ENCODE measurements at regions of chr13 and their contacts with region 1.

Region 1: GRCh38 chr13:41916173-41916954 is 44.5 kb downstream of the VWA8 start:
- DNase-seq: no peak
- ATAC-seq: peak; percentile 35 to 81 (median 72)
- H3K4me3 ChIP-seq: peak overlapping the region; percentile 42
- H3K27ac ChIP-seq: peak overlapping the region; percentile 71
- H3K4me1 ChIP-seq: peaks cover 64% of the 10 kb centered on the region
- H3K27me3 ChIP-seq: no peaks in the 10 kb centered on the region
- CTCF ChIP-seq: no peak

Region 2: DNA sequence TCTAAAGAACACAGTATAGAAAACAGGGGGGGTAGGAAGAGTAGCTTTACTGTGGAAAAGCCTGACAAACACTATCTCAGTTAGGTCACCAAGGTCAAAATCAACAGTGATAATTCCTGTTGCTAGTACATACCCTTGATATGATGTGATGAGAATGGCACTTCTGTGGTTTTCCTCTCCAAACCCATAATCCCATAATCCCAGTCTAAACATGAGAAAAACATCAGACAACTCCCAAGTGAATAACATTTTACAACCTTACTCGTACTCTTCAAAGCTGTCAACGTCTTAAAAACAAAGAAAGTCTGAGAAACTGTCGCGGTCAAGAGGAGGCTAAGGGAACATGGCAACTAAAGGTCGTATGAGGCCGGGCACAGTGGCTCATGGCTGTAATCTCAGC is 1387.5 kb before region 1 on chr13:
- intact Hi-C with region 1: no loop called
- DNase-seq: no peak
- ATAC-seq: no peak
- H3K4me3 ChIP-seq: no peak overlapping the region
- H3K27ac ChIP-seq: no peak overlapping the region
- H3K4me1 ChIP-seq: no peaks in the 10 kb centered on the region
- H3K27me3 ChIP-seq: no peaks in the 10 kb centered on the region
- CTCF ChIP-seq: no peak

Region 3: GRCh38 chr13:41955605-41956004 is 39.2 kb after region 1 on chr13:
- intact Hi-C with region 1: loop called in 1 of 2 experiments (anchors 5 kb)
- DNase-seq: peak in 1 of 2 donors; percentile 54
- ATAC-seq: peak; percentile 59 to 68 (median 65)
- H3K4me3 ChIP-seq: peak overlapping the region; percentile 11
- H3K27ac ChIP-seq: peak overlapping the region; percentile 63
- H3K4me1 ChIP-seq: peaks cover 37% of the 10 kb centered on the region
- H3K27me3 ChIP-seq: no peaks in the 10 kb centered on the region
- CTCF ChIP-seq: no peak

Region 4: DNA sequence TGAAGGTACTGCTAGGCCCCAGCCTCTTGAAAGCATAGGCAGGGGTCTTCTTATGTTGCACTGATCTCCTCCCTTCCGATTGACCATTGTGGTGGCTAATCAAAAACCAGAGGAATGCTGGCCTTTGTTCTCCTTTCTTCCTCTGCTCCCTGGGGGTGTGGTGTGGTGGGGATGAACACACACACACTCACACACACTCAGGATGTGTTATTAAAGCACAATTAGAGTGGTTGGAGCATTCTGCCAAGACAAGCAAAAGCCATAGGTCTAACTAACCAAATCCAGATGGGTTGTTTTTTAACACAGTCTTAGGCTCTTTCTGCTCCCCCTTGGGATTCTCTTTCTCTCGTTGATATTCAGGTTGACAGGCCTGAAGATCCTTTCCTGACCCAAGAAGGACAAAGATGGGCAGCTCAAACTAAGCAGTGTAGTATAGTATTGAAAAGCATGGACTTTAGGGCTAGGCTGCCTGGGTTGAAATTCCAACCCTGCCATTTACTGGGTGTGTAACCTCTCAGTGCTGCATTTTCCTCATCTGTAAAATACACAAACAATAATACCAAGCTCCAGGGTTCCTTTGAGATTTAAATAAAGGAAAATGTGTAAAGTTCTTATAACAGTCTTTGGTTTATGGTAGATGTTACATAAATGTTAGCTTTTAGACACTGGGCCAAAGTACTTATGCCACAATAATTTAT is 106.6 kb after region 1 on chr13:
- intact Hi-C with region 1: no loop called
- DNase-seq: no peak
- ATAC-seq: no peak
- H3K4me3 ChIP-seq: no peak overlapping the region
- H3K27ac ChIP-seq: no peak overlapping the region
- H3K4me1 ChIP-seq: no peaks in the 10 kb centered on the region
- H3K27me3 ChIP-seq: peaks cover 0 to 2% (median 0%) of the 10 kb centered on the region in 3 donors
- CTCF ChIP-seq: no peak